Tibial artery (tissue), 4 donors: ENCODE measurements at regions of chr5 and their contacts with region 1.

Region 1: DNA sequence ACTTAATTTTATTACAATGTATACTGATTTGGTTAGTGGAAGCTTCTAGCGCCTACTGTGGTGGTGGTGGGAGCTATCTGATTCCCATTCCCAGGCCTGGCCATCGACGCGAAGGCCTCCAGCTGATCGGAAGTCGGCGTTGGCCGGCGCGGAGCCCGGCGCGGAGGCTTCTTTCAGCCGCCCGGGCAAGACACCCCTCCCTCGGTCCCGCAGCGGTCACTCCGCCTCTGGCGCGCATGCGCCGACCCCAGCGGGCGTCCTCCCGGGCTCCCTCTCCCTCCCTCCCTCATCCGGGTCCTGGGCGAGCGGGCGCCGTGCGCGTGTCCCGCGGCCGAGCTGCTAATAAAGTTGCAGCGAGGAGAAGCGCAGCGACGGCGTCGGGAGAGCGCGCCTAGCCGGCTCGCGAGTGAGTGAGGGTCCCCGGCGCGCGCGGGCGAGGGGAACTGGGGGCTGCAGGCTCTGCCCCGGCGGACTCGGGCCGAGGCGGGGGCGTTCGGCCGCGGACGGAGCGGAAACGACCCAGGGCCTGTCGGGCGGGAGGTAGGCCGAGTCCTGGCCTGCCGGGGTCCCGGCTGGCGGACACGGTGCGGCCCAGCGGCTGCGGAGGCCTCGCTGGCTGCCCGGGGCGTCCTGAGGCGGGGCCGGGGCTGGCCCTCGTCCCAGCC is at the start of gene SMAD5:
- DNase-seq: peak; percentile 94 to 98
- H3K4me3 ChIP-seq: peak within 1 kb of the TSS; percentile 64 to 85
- H3K27ac ChIP-seq: peak within 1 kb of the TSS; percentile 90 to 95
- H3K4me1 ChIP-seq: peaks cover 0 to 66% (median 30%) of the 10 kb centered on the region in 4 donors
- H3K27me3 ChIP-seq: no peaks in the 10 kb centered on the region
- CTCF ChIP-seq: no peak

Region 2: DNA sequence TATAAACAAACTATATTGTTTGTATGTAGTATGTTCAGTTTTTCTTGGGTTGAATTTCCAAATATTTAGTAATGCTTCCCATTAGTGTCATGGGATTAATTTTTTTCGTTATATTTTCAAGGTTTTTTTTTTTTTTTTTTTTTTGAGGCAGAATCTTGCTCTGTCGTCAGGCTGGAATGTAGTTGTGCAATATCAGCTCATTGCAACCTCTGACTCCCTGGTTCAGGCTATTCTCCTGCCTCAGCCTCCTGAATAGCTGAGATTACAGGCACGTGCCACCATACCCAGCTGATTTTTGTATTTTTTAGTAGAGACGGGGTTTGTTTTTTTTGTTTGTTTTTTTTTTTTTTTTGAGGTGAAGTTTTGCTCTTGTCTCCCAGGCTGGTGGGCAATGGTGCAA is 1363.5 kb before region 1 on chr5:
- intact Hi-C with region 1: loop called (anchors 5 kb)
- DNase-seq: no peak
- H3K4me3 ChIP-seq: no peak overlapping the region
- H3K27ac ChIP-seq: no peak overlapping the region
- H3K4me1 ChIP-seq: no peaks in the 10 kb centered on the region
- H3K27me3 ChIP-seq: no peaks in the 10 kb centered on the region
- CTCF ChIP-seq: no peak

Region 3: DNA sequence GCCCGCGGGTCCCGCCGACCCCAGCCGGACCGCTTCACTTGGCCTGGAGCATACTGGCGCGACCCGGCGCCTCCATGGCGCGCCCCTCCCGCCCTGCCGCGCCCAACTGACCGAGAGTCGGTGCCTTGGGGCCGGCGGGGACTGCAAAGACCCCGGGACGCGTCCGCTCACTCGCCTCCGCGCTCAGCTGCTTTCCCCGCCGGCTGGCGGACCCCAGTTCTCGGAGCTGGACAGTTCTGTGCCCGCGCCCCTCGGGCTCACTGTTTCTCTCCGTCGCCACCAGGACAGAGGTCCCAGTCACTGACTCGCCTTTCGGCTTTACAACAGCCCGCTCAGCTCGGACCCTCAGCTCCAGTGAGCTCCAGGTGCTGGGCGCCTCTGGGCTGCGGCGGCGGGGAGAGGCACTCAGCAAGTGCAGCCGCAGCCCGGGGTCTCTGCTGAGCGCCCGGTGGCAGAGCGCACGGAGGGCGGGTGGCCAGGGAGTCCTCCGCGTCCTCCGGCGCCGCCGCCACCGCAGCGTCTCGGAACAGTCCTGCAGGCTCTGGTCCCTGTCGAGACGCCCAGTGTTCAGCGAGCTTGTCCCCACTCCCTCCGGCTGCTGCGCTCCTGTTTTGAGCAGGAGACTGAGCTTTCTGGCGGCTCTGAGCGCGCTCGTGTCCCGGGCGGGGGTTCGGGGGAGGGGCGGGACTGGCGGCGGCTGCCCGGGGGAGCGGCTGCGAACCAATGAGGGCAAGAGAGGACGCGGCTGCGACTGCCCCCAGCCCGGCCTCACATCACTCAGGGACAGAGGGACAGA is 60.0 kb after region 1 on chr5 and contains the start of gene SMIM32:
- intact Hi-C with region 1: loop called (anchors 10 kb)
- DNase-seq: no peak
- H3K4me3 ChIP-seq: peak within 1 kb of the TSS; percentile 43 to 55
- H3K27ac ChIP-seq: no peak within 1 kb of the TSS
- H3K4me1 ChIP-seq: peaks cover 0 to 39% (median 23%) of the 10 kb centered on the region in 4 donors
- H3K27me3 ChIP-seq: peaks cover 0 to 22% of the 10 kb centered on the region in 2 donors
- CTCF ChIP-seq: no peak

Region 4: DNA sequence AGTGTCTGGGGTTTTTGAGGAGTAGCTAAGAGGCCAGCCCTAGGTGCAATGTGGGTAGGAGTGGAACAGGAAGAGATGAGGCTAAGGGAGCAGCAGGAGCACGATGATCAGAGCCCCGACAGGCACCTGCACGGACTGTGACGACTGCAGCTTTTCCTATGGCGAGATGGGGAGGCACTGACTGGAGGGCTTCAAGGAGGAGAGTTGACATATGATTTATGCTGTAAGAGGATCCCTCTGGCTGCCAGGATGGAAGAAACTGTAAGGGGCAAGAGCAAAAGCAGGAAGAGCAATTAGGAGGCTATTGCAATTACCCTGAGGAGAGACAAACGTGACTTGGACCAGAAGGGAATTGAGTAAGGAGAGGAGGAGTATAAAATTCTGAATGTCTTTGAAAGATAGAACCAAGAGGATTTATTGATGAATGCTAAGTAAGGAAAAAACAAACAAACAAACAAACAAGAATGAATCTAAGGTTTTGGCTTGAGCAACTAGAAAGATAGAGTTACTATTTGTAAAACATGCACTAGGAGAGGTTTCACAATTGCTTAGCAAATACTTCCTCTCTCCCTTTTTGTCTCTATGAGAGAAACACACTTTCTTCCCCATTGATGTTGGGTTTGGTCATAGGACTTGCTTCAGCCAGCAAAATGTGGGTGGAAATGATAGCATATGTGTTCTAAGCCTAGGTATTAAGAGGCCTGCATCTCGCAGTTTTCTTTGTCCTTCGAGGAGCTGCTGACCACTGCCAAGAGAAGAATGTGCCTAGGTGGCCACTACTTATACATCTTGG is 199.7 kb after region 1 on chr5:
- intact Hi-C with region 1: no loop called
- DNase-seq: no peak
- H3K4me3 ChIP-seq: no peak overlapping the region
- H3K27ac ChIP-seq: no peak overlapping the region
- H3K4me1 ChIP-seq: no peaks in the 10 kb centered on the region
- H3K27me3 ChIP-seq: no peaks in the 10 kb centered on the region
- CTCF ChIP-seq: no peak